ENCODE measurements at regions of chr17 and their contacts with region 1.

Region 1: GRCh38 chr17:53234138-53234537 is 588.6 kb upstream of the KIF2B start:
- DNase-seq: no peak
- ATAC-seq: no peak
- H3K4me3 ChIP-seq: no peak overlapping the region
- H3K27ac ChIP-seq: no peak overlapping the region
- H3K4me1 ChIP-seq: no peaks in the 10 kb centered on the region
- H3K27me3 ChIP-seq: no peaks in the 10 kb centered on the region

Region 2: DNA sequence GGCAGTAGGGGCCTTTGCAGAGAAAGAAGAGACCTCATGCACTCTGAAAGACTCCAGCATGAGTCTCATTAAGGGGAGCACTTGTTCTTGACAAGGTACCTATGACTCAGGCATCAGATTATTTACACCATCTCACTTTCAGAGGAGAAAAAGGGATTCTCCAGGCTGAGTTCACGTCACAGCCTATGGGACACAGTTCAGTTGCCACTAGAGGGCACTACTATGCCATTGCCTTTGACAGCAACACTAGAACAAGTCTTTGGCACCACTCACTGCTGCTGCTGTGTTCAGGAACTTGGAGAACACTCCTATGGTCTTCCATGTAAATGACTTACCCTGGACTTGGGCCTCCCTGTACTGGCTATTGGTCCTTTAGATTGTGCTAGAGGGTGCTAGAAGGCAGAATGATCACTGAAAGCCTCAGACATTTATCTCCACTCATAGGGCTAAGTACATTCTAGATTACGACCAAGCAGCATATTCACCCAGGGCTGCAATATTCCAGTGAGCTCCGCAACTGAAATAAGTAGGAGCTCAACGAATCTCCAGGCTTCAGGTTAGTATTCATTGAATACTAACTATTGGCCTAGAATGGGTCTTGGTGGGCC is 850.5 kb before region 1 on chr17:
- intact Hi-C with region 1: no loop called
- DNase-seq: no peak
- ATAC-seq: peak; percentile 65
- H3K4me3 ChIP-seq: no peak overlapping the region
- H3K27ac ChIP-seq: no peak overlapping the region
- H3K4me1 ChIP-seq: no peaks in the 10 kb centered on the region
- H3K27me3 ChIP-seq: no peaks in the 10 kb centered on the region

Region 3: GRCh38 chr17:53249036-53249435 is 14.9 kb after region 1 on chr17:
- intact Hi-C with region 1: loop called in 1 of 2 experiments (anchors 1 kb)
- DNase-seq: no peak
- ATAC-seq: no peak
- H3K4me3 ChIP-seq: no peak overlapping the region
- H3K27ac ChIP-seq: no peak overlapping the region
- H3K4me1 ChIP-seq: no peaks in the 10 kb centered on the region
- H3K27me3 ChIP-seq: no peaks in the 10 kb centered on the region